Endothelial cell of umbilical vein (primary cell): ENCODE measurements at regions of chr7 and their contacts with region 1.

Region 1: DNA sequence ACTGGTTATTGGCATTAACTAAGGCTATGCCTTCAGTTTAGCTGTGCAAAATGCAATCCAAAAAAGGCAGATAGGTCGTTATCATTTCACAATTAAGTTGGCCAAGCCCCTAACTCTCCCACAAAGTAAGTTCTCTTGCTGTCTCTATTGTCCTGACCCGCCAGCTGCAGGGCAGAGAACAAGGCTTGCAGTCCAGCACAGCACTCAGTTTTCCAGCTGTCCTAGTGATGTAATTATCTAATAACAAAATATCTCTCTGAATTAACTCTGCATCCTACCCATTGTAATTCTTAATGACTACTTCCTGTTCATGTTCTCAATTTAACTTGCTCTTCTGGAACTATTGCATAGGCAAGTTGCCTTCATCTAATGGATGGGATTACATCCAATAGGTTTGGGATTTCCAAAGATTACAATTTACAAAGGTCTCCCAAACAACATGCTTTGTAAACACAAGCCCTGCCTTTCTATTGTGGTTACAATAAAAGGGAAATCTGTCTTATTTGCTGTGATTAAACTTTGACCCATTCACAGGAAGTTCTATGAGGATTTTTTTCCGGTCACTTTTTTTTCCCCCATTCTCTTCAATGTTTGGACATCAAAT is 55.2 kb downstream of the CDK6 start:
- DNase-seq: peak; percentile 89
- H3K4me3 ChIP-seq: no peak overlapping the region
- H3K27ac ChIP-seq: peak overlapping the region; percentile 31
- H3K4me1 ChIP-seq: peaks cover 20% of the 10 kb centered on the region
- H3K27me3 ChIP-seq: no peaks in the 10 kb centered on the region
- CTCF ChIP-seq: no peak
- POLR2A ChIP-seq: no peak

Region 2: GRCh38 chr7:92698237-92698841 is 82.9 kb before region 1 on chr7:
- CTCF ChIA-PET with region 1: no interaction called
- POLR2A ChIA-PET with region 1: no interaction called
- dilution Hi-C with region 1: no loop called
- intact Hi-C with region 1: loop called (anchors 1 kb)
- DNase-seq: peak; percentile 95
- H3K4me3 ChIP-seq: peak overlapping the region in 1 of 3 experiments; percentile 1
- H3K27ac ChIP-seq: peak overlapping the region; percentile 75
- H3K4me1 ChIP-seq: peaks cover 44% of the 10 kb centered on the region
- H3K27me3 ChIP-seq: no peaks in the 10 kb centered on the region
- CTCF ChIP-seq: no peak
- POLR2A ChIP-seq: peak; percentile 35

Region 3: GRCh38 chr7:92717993-92718716 is 63.1 kb before region 1 on chr7:
- CTCF ChIA-PET with region 1: interaction called, 3 read pairs
- POLR2A ChIA-PET with region 1: no interaction called
- dilution Hi-C with region 1: no loop called
- intact Hi-C with region 1: loop called (anchors 1 kb)
- DNase-seq: peak; percentile 97
- H3K4me3 ChIP-seq: peak overlapping the region; percentile 28 to 72 (median 36)
- H3K27ac ChIP-seq: peak overlapping the region; percentile 95
- H3K4me1 ChIP-seq: peaks cover 28% of the 10 kb centered on the region
- H3K27me3 ChIP-seq: no peaks in the 10 kb centered on the region
- CTCF ChIP-seq: no peak
- POLR2A ChIP-seq: peak; percentile 59

Region 4: GRCh38 chr7:92731335-92732063 is 49.7 kb before region 1 on chr7:
- CTCF ChIA-PET with region 1: no interaction called
- POLR2A ChIA-PET with region 1: no interaction called
- dilution Hi-C with region 1: no loop called
- intact Hi-C with region 1: loop called (anchors 1 kb)
- DNase-seq: peak; percentile 75
- H3K4me3 ChIP-seq: no peak overlapping the region
- H3K27ac ChIP-seq: peak overlapping the region; percentile 39
- H3K4me1 ChIP-seq: peaks cover 22% of the 10 kb centered on the region
- H3K27me3 ChIP-seq: no peaks in the 10 kb centered on the region
- CTCF ChIP-seq: no peak
- POLR2A ChIP-seq: no peak

Region 5: GRCh38 chr7:92768501-92769393 is 12.5 kb before region 1 on chr7:
- CTCF ChIA-PET with region 1: interaction called, 6 read pairs
- POLR2A ChIA-PET with region 1: no interaction called
- dilution Hi-C with region 1: no loop called
- intact Hi-C with region 1: loop called (anchors 2 kb)
- DNase-seq: no peak
- H3K4me3 ChIP-seq: no peak overlapping the region
- H3K27ac ChIP-seq: no peak overlapping the region
- H3K4me1 ChIP-seq: peaks cover 14% of the 10 kb centered on the region
- H3K27me3 ChIP-seq: no peaks in the 10 kb centered on the region
- CTCF ChIP-seq: no peak
- POLR2A ChIP-seq: no peak

Region 6: GRCh38 chr7:92809397-92810241 is 28.4 kb after region 1 on chr7:
- CTCF ChIA-PET with region 1: interaction called, 3 read pairs
- POLR2A ChIA-PET with region 1: no interaction called
- dilution Hi-C with region 1: no loop called
- intact Hi-C with region 1: loop called (anchors 1 kb)
- DNase-seq: peak; percentile 90
- H3K4me3 ChIP-seq: peak overlapping the region in 1 of 3 experiments; percentile 32
- H3K27ac ChIP-seq: peak overlapping the region; percentile 86
- H3K4me1 ChIP-seq: peaks cover 29% of the 10 kb centered on the region
- H3K27me3 ChIP-seq: no peaks in the 10 kb centered on the region
- CTCF ChIP-seq: no peak
- POLR2A ChIP-seq: no peak

Region 7: GRCh38 chr7:93258661-93259060 is 477.4 kb after region 1 on chr7:
- CTCF ChIA-PET with region 1: no interaction called
- POLR2A ChIA-PET with region 1: no interaction called
- dilution Hi-C with region 1: no loop called
- intact Hi-C with region 1: no loop called
- DNase-seq: no peak
- H3K4me3 ChIP-seq: no peak overlapping the region
- H3K27ac ChIP-seq: no peak overlapping the region
- H3K4me1 ChIP-seq: no peaks in the 10 kb centered on the region
- H3K27me3 ChIP-seq: no peaks in the 10 kb centered on the region
- CTCF ChIP-seq: no peak
- POLR2A ChIP-seq: no peak